ENCODE measurements at regions of chr2 and their contacts with region 1.

Region 1: DNA sequence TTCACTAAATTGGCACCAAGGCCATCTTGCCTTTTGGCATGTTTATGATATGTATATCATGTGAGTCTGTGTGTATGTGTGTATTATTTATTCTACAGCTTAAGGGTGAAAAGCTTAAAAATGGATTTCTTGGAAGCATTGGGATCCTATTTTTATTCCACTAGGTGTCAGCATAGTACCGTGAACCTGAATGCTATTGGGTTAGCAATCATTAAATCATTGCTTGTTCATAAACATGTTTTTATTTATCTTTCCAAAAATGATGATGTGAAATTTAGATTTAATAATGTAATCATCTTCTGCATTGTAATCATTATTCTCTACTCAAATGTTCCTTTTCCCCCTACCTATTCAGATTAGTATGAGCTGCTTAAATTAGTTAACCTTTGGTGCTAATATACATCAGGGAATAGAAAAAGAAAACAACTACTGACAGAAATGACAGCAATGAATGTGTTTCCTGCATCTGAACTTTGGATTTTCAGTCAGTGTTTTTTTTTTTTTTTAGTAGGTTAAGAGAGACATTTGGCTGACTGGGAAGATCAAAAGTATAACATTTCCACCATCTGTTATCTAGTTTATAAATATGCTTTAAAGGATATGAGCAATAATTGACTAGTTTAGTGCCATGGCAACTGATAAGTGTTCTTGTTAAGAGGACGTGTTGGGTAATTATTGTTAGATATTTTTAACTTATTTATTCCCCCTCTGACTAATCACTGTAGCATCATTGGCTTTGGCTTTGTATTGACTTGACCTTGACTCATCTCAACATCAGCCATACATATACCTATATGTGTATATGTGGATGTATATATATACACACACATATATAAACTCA is 14.1 kb upstream of the ZSWIM2 start:
- DNase-seq: no peak
- H3K4me3 ChIP-seq: no peak overlapping the region
- H3K27ac ChIP-seq: no peak overlapping the region
- H3K4me1 ChIP-seq: no peaks in the 10 kb centered on the region
- H3K27me3 ChIP-seq: no peaks in the 10 kb centered on the region
- CTCF ChIP-seq: peak in 5 of 6 experiments; percentile 11 to 64 (median 56)
- POLR2A ChIP-seq: no peak

Region 2: GRCh38 chr2:186717320-186718007 is 145.6 kb before region 1 on chr2:
- intact Hi-C with region 1: no loop called
- DNase-seq: no peak
- H3K4me3 ChIP-seq: no peak overlapping the region
- H3K27ac ChIP-seq: no peak overlapping the region
- H3K4me1 ChIP-seq: no peaks in the 10 kb centered on the region
- H3K27me3 ChIP-seq: no peaks in the 10 kb centered on the region
- CTCF ChIP-seq: no peak
- POLR2A ChIP-seq: no peak

Region 3: GRCh38 chr2:187459256-187459655 is 596.2 kb after region 1 on chr2:
- intact Hi-C with region 1: loop called (anchors 5 kb)
- DNase-seq: no peak
- H3K4me3 ChIP-seq: no peak overlapping the region
- H3K27ac ChIP-seq: no peak overlapping the region
- H3K4me1 ChIP-seq: no peaks in the 10 kb centered on the region
- H3K27me3 ChIP-seq: no peaks in the 10 kb centered on the region
- CTCF ChIP-seq: no peak
- POLR2A ChIP-seq: no peak